Dorsolateral prefrontal cortex (tissue), 120 donors: ENCODE measurements at regions of chr9 and their contacts with region 1.

Region 1: DNA sequence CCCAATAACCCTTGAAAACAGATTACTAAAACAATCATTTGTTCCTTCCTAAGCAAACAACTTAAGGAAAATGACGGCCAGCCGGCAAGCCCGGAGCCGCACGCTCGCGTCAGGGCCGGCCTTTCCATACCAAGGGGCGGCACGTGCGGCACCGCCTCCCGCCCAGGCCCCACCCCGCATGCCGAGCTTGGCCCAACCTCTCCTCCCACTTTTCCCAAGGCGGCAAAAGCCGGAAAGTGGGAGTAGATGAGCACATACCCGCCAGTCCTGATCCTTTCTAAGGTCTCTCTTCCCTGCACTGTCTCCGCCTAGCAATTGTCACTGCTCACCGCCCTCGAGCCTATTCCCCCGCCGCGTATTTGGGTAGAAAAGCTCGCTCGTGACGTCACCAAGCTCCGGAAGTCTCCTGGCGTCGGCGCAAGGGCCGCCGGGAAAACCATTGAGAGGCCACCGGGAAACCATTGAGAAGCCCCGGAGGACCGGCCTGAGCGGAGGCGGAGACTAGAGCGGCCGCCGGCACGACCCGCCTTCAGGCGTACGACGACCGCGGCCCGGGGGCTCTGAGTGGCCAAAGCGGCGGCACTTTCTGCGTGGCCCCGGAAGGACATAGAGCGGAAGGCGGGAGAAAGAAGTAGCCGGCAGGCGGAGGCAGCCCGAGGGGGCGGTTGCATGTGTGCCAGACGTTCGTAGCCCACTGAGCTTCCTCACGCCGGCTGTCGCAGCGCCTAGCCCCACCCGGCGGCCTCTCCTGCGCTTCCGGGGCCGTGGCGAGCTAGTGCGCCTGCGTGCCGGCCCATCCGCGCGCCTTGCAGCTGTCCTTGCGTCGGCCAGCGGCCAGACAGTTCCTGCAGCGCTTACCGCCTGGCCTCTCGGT is at the starts of genes NCBP1 and TSTD2:
- DNase-seq: peak; percentile 93 to 98 (median 97)
- H3K4me3 ChIP-seq: peak within 1 kb of the TSS; percentile 78 to 100 (median 96)
- H3K27ac ChIP-seq: peak within 1 kb of the TSS; percentile 82 to 99 (median 96)
- H3K27me3 ChIP-seq: no peaks in the 10 kb centered on the region
- CTCF ChIP-seq: peak in 34 of 56 donors; percentile 15 to 63 (median 32)
- total RNA-seq, gene NCBP1: 17.9 to 48.7 (median 32.4) TPM
- total RNA-seq, gene TSTD2: 17.7 to 33.6 (median 25.5) TPM

Region 2: GRCh38 chr9:97696803-97697601 is 63.8 kb after region 1 on chr9 and contains the start of gene XPA:
- intact Hi-C with region 1: loop called (anchors 2 to 5 kb)
- DNase-seq: peak; percentile 89 to 98 (median 94)
- H3K4me3 ChIP-seq: peak within 1 kb of the TSS; percentile 64 to 99 (median 89)
- H3K27ac ChIP-seq: peak within 1 kb of the TSS; percentile 77 to 99 (median 94)
- H3K27me3 ChIP-seq: no peaks in the 10 kb centered on the region
- CTCF ChIP-seq: peak in 30 of 56 donors; percentile 12 to 56 (median 34)
- total RNA-seq, gene XPA: 12.5 to 32.8 (median 21.9) TPM

Region 3: GRCh38 chr9:97890038-97890437 is 256.8 kb after region 1 on chr9:
- intact Hi-C with region 1: no loop called
- DNase-seq: no peak
- H3K4me3 ChIP-seq: no peak overlapping the region
- H3K27ac ChIP-seq: no peak overlapping the region
- H3K27me3 ChIP-seq: no peaks in the 10 kb centered on the region
- CTCF ChIP-seq: peak in 46 of 56 donors; percentile 7 to 55 (median 35)

Region 4: GRCh38 chr9:98465799-98466198 is 832.6 kb after region 1 on chr9:
- intact Hi-C with region 1: no loop called
- DNase-seq: no peak
- H3K4me3 ChIP-seq: no peak overlapping the region
- H3K27ac ChIP-seq: no peak overlapping the region
- H3K27me3 ChIP-seq: no peaks in the 10 kb centered on the region
- CTCF ChIP-seq: no peak